ENCODE measurements at regions of chr18 and their contacts with region 1.

Region 1: GRCh38 chr18:33851546-33852078 is 273.6 kb downstream of the ASXL3 start:
- DNase-seq: no peak
- H3K4me3 ChIP-seq: no peak overlapping the region
- H3K27ac ChIP-seq: no peak overlapping the region
- H3K4me1 ChIP-seq: no peaks in the 10 kb centered on the region
- H3K27me3 ChIP-seq: no peaks in the 10 kb centered on the region
- CTCF ChIP-seq: no peak

Region 2: DNA sequence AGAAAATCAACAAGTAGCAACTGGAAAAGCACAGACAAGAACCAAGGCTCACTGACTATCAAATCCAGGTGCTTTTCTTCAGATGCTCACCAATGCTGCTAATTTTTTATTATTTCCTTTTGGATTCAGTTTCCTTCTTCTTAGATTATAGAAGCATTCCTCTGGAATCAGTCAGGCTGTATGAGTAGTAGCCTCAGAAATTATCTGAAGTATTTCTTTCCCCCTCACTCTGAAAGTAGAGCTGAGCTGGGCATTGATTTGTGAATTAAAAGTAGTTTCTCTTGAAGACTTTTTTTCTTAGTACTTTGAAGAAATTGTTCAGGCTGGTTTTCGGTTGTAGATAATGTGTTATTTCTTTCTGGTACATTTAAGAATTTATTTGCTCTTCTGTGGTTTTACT is 99.4 kb after region 1 on chr18:
- intact Hi-C with region 1: loop called (anchors 10 kb)
- DNase-seq: no peak
- H3K4me3 ChIP-seq: no peak overlapping the region
- H3K27ac ChIP-seq: no peak overlapping the region
- H3K4me1 ChIP-seq: no peaks in the 10 kb centered on the region
- H3K27me3 ChIP-seq: no peaks in the 10 kb centered on the region
- CTCF ChIP-seq: no peak

Region 3: GRCh38 chr18:34153711-34154110 is 302.1 kb after region 1 on chr18:
- intact Hi-C with region 1: no loop called
- DNase-seq: no peak
- H3K4me3 ChIP-seq: no peak overlapping the region
- H3K27ac ChIP-seq: no peak overlapping the region
- H3K4me1 ChIP-seq: no peaks in the 10 kb centered on the region
- H3K27me3 ChIP-seq: no peaks in the 10 kb centered on the region
- CTCF ChIP-seq: no peak